OCI-LY7 (cell line): ENCODE measurements at regions of chr3 and their contacts with region 1.

Region 1: GRCh38 chr3:54633444-54634121 is 294.3 kb downstream of the LRTM1 start:
- DNase-seq: no peak
- H3K4me3 ChIP-seq: no peak overlapping the region
- H3K27ac ChIP-seq: no peak overlapping the region
- H3K4me1 ChIP-seq: no peaks in the 10 kb centered on the region
- CTCF ChIP-seq: no peak

Region 2: DNA sequence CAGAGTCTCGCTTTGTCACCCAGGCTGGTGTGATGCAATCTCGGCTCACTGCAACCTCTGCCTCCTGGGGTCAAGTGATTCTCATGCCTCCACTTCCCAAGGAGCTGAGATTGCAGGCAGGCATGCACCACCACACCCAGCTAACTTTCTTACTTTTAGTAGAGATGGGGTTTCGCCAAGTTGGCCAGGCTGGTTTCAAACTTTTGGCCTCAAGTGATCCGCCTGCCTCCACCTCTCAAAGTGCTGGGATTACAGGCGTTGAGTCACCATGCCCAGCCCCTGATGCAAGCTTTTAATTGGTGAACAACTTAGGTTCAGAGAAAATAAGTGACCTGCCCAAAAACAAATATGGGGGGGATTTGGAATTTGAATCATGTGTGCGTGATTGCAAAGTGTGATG is 48.1 kb after region 1 on chr3:
- CTCF ChIA-PET with region 1: no interaction called
- POLR2A ChIA-PET with region 1: interaction called, 12 read pairs
- intact Hi-C with region 1: no loop called
- DNase-seq: no peak
- H3K4me3 ChIP-seq: no peak overlapping the region
- H3K27ac ChIP-seq: no peak overlapping the region
- H3K4me1 ChIP-seq: no peaks in the 10 kb centered on the region
- CTCF ChIP-seq: no peak